Activated CD4-positive, alpha-beta memory T cell treated with anti-CD3 and anti-CD28 coated beads, Interleukin-2, amount 10 ng/mL, durations not matched to agents 7 days and 5 days (primary cell): ENCODE measurements at regions of chr16 and their contacts with region 1.

Region 1: DNA sequence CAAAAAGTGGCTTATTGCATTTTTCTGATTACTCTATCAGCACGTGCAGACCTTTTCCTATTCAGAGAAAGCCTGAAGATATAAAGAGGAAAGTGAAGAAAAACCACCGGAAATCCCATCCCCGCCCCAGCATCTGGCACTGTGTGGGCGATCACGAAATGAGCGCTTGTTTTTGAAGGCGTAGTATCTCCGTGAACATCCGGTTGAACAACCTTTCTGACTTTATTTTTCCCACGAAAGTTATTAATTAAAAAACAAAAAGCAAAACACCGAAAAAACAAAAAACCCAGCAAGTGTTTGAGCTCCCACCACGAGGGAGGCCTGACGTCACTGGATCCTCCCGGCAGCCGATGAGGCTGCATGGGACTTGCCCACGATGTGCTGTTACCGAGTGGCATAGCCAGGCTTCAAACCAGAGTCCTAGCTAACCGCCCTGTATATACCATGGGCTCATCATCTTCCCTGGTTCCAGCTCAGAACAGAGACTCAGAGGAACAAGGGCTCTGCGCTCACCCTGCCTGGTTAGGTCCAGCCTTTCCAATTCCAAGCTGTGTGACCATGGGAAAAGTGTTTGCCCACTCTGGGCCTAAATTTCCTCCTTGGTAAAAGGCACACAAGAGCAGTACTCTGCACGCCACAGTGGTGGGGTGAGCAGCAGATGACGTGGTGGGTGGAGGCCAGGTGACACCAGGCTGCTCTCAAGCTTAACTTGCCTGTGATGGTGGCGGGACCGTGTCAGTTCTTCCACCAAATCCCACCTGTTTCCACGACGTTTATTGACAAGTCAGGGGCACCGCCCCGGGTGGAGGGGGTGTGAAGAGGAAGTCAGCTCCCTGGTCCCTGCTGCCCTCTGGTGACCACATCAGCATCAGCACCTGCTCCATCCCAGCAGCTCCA is 34.3 kb upstream of the IL21R start:
- DNase-seq: peak; percentile 87
- H3K4me3 Mint-ChIP-seq: peak overlapping the region; percentile 52
- H3K27ac Mint-ChIP-seq: peak overlapping the region; percentile 96
- H3K4me1 Mint-ChIP-seq: peaks cover 55% of the 10 kb centered on the region
- H3K27me3 Mint-ChIP-seq: no peaks in the 10 kb centered on the region

Region 2: GRCh38 chr16:27169511-27170071 is 198.1 kb before region 1 on chr16:
- CTCF ChIA-PET with region 1: interaction called, 11 read pairs
- POLR2A ChIA-PET with region 1: interaction called, 14 read pairs
- DNase-seq: peak; percentile 81
- H3K4me3 Mint-ChIP-seq: peak overlapping the region; percentile 26
- H3K27ac Mint-ChIP-seq: peak overlapping the region; percentile 83
- H3K4me1 Mint-ChIP-seq: peaks cover 64% of the 10 kb centered on the region
- H3K27me3 Mint-ChIP-seq: peaks cover 10% of the 10 kb centered on the region

Region 3: DNA sequence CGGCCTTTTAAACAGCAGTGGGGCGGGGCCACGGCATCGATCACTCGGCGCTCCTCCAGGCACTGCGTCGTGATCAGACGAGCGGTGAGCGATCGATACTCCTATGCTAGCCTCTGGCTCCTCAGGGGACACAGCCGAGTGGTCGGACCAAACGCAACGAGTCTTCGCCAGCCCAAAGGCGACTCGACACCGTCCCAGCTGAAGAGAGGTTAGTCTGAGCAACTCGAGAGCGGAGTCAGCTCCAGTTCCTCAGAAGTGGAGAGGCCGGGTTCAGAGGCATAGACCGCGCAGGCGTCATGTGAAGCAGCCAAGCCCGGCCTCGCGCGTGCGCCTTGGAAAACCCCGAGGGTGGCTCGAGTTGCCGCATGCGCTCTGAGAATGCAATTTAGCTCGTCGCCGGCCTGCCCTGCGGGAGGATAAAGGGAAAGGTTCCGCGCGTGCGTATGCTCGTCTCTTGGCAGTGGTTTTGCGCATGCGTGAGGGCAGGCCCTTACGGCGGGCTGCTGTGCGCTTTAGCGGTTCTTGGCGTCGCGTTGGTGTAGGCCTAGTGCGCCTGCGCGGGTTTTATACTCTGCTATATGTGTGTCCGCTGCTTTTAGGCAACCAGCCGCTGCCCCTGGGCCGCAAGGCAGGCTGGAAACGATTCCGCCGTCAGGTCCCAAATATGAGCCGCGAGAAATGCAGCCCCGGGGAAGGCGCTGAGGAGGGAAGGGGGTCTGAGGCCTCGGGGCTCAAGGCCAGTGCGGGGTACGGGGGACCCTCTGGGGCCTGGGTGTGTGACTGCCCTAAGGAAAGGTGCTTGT is 164.1 kb before region 1 on chr16 and contains the start of gene KDM8:
- CTCF ChIA-PET with region 1: interaction called, 14 read pairs
- POLR2A ChIA-PET with region 1: interaction called, 10 read pairs
- DNase-seq: peak; percentile 100
- H3K4me3 Mint-ChIP-seq: peak within 1 kb of the TSS; percentile 95
- H3K27ac Mint-ChIP-seq: peak within 1 kb of the TSS; percentile 99
- H3K4me1 Mint-ChIP-seq: peaks cover 56% of the 10 kb centered on the region
- H3K27me3 Mint-ChIP-seq: no peaks in the 10 kb centered on the region
- total RNA-seq, gene KDM8: 12.7 to 14.3 TPM

Region 4: DNA sequence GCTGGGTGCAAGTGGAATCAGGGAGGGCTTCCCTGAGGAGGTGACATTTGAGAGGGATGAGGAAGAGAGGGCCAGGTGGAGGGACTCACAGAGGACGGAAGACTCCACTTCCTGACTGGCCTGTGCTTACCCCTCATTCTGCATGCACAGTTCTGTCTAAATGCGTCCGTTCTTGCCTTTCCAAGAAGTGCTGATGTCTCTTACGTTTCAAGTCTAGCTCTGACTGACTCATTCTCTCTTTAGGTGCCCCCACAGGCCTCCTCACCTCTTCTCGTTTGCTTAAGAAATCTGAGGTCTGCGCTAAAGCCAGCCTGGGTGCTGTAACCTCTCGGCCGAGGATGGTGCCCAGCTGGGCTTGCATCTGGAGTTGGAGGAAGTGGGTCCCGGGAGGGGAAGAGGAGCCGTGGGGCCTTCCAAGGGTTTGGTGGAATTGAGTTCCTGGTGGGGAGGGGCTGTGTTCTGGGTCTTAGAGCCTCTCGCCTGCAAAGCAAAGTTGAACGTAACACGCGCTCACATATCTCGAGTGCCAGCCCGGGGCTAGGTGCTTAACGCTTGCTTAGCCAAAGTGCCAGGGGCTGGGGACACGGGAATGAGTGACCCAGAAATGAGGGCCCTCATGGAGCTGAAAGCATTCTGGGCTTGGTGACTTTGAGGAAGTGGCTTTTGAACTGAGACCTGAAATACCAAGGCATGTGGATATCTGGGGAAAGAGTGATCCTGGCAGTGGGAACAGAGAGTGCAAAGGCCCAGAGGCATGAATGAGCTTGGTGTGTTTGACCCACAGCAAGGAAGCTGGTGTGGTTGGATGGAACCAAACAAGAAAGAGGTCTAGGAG is 49.1 kb before region 1 on chr16:
- CTCF ChIA-PET with region 1: interaction called, 32 read pairs
- POLR2A ChIA-PET with region 1: interaction called, 40 read pairs
- DNase-seq: peak; percentile 72
- H3K4me3 Mint-ChIP-seq: peak overlapping the region; percentile 97
- H3K27ac Mint-ChIP-seq: peak overlapping the region; percentile 98
- H3K4me1 Mint-ChIP-seq: peaks cover 75% of the 10 kb centered on the region
- H3K27me3 Mint-ChIP-seq: no peaks in the 10 kb centered on the region

Region 5: GRCh38 chr16:27355610-27356009 is 12.1 kb before region 1 on chr16:
- CTCF ChIA-PET with region 1: interaction called, 14 read pairs
- POLR2A ChIA-PET with region 1: interaction called, 24 read pairs
- DNase-seq: peak; percentile 49
- H3K4me3 Mint-ChIP-seq: no peak overlapping the region
- H3K27ac Mint-ChIP-seq: no peak overlapping the region
- H3K4me1 Mint-ChIP-seq: peaks cover 13% of the 10 kb centered on the region
- H3K27me3 Mint-ChIP-seq: no peaks in the 10 kb centered on the region

Region 6: DNA sequence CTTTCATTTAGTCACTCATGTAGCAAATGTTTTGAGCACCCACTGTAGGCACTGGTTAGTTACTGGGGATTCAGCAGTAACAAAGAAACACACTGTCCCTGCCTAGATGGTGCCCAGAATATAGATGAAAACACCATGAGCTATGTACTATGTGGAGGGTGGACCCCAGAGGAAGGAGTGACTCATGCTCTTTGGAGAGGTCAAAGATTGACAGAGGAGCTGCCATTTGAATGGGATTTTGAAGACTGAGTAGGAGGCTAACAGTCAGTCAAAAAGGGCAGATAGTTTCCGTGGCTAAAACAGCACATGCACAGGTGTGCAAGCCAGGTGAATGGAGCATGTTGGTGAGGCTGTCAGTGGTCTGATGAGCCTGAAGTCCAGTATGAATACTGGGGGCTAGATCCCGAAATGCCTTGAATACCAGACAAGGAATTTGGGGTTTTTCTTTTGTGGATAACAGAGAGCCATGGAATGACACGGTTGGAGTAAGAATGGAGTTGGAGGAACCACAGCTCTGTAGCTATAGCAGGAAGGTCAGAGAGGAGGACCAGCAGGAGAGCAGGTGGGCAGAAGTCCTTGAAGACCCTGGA is 40.4 kb after region 1 on chr16:
- CTCF ChIA-PET with region 1: interaction called, 22 read pairs
- POLR2A ChIA-PET with region 1: interaction called, 80 read pairs
- DNase-seq: no peak
- H3K4me3 Mint-ChIP-seq: peak overlapping the region; percentile 50
- H3K27ac Mint-ChIP-seq: peak overlapping the region; percentile 87
- H3K4me1 Mint-ChIP-seq: peaks cover 83% of the 10 kb centered on the region
- H3K27me3 Mint-ChIP-seq: no peaks in the 10 kb centered on the region